ENCODE measurements at regions of chr3 and their contacts with region 1.

Region 1: DNA sequence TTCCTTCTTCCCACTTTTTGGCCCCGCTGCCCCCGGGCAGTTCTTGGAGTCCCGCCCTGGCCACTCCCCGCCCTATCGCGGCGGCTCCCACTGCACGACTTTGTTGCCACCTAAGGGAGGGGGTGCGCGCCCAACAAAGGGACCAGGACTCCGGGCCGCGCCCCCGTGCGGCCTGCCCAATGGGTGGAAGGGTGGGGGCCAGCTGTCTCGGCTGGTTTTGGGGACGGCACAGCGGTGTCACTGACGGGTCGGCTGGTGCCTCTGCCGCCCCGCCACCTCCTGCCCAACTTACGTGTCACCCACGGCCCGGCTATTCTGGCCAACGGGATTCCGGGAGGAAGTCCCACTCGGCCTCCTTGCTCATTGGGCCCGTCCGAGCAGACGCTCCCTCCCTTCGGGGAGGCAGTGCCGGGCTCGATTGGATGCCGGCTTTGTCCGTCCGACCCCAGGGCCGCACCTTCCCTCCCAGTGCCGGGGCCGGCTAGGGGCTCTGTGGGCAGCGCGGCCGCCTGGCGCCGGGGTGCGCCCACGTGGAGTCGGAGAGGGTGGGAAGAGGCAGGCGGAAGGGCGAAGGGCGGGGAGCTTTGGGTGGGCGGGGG is at the start of gene GOLIM4:
- DNase-seq: peak; percentile 94
- ATAC-seq: peak; percentile 94
- H3K4me3 ChIP-seq: peak within 1 kb of the TSS; percentile 77 to 79 (median 77)
- H3K27ac ChIP-seq: peak within 1 kb of the TSS; percentile 74
- H3K4me1 ChIP-seq: peaks cover 41% of the 10 kb centered on the region
- H3K27me3 ChIP-seq: no peaks in the 10 kb centered on the region; a peak in 1 of 5 replicates
- CTCF ChIP-seq: peak; percentile 39
- EP300 ChIP-seq: 0 out of 4 replicates have a peak, but pooled peaks of 1 of the 2 experiments have one; percentile 17
- POLR2A ChIP-seq: peak in 1 of 2 experiments; percentile 82; a peak in 2 of 4 replicates
- RAD21 ChIP-seq: no peak
- total RNA-seq, gene GOLIM4: 31.5 and 47.7 TPM in 2 replicates

Region 2: DNA sequence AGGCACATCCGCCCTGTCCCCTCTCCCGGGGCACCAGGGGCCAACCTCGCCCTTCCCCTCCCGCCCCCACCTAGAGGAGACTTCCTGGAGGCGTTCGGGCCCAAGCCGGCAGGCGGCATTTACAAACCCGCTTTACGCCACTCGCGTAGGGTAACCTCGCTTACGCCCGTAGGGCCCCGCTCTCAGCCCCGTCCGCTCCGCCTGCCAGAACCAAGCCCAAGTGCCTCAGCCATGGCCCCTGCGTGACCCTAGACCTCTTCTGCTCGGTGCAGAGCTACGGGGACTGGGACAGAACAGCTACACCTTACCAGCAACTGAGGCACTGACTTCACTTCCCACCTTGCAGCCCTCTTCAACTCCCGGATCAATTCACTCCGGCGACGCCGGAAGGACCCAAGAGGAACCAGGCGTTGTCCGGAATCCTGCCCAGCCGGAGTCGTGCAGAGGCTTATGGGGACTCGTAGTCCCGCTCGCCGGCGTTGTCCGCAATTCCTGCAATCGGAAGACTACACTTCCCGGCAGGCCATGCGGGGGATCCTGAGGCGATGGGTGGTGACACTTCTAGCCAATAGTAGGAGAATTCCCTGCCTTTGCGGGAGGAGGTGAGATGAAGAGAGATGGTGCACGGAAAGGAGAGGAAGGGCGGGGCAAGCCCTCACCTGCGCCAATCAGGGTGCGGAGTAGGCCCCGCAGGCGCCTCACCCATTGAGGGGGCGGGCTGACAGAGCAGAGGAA is 361.0 kb before region 1 on chr3 and contains the start of gene PDCD10:
- CTCF ChIA-PET with region 1: no interaction called
- POLR2A ChIA-PET with region 1: no interaction called
- in situ Hi-C with region 1: no loop called
- intact Hi-C with region 1: loop called (anchors 10 kb)
- DNase-seq: peak; percentile 99
- ATAC-seq: peak; percentile 92
- H3K4me3 ChIP-seq: peak within 1 kb of the TSS; percentile 95 to 98 (median 98)
- H3K27ac ChIP-seq: peak within 1 kb of the TSS; percentile 97
- H3K4me1 ChIP-seq: peaks cover 69% of the 10 kb centered on the region
- H3K27me3 ChIP-seq: peaks cover 0 to 4% of the 10 kb centered on the region in 2 experiments; a peak in 1 of 5 replicates
- CTCF ChIP-seq: 0 out of 2 replicates have a peak, but pooled peaks have one; percentile 12
- EP300 ChIP-seq: no peak
- POLR2A ChIP-seq: peak; percentile 80 to 91
- RAD21 ChIP-seq: no peak
- total RNA-seq, gene PDCD10: 53.9 and 84.4 TPM in 2 replicates

Region 3: GRCh38 chr3:168047190-168047795 is 48.4 kb before region 1 on chr3:
- CTCF ChIA-PET with region 1: interaction called, 7 read pairs
- POLR2A ChIA-PET with region 1: no interaction called
- in situ Hi-C with region 1: no loop called
- intact Hi-C with region 1: loop called (anchors 2 kb)
- DNase-seq: peak; percentile 76
- ATAC-seq: peak; percentile 87
- H3K4me3 ChIP-seq: no peak overlapping the region
- H3K27ac ChIP-seq: no peak overlapping the region
- H3K4me1 ChIP-seq: no peaks in the 10 kb centered on the region
- H3K27me3 ChIP-seq: no peaks in the 10 kb centered on the region
- CTCF ChIP-seq: peak; percentile 89
- EP300 ChIP-seq: no peak
- POLR2A ChIP-seq: no peak
- RAD21 ChIP-seq: peak; percentile 78

Region 4: DNA sequence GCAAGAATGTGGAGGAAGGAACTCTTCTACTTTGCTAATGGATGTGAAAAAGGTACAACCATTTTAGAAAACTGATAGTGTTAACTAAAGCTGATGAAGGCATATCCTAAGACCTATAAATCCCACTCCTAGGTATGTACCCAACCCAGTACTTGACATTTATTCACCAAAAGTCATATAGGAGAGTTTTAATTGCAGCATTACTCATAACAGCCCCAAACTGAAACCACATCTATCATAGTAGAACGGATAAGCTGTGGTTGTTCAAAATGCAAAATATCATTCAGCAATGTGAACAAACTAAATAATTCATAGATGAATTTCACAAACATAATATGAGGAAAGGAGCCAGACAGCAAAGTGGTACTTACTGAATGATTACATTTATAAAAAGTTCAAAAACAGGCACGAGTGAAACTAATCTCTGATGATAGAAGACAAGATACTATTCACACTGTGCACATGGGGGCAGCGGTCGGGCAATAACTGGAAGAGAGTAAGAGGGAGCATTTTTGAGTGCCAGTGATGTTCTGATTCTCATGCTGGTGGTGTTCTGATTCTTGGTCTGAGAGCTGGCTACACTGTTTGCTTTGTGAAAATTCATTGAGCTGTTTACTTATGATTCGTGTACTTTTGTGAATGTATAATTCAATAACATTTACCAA is 34.2 kb before region 1 on chr3:
- CTCF ChIA-PET with region 1: no interaction called
- POLR2A ChIA-PET with region 1: interaction called, 3 read pairs
- in situ Hi-C with region 1: no loop called
- intact Hi-C with region 1: loop called (anchors 2 kb)
- DNase-seq: peak; percentile 13
- ATAC-seq: peak; percentile 80
- H3K4me3 ChIP-seq: no peak overlapping the region
- H3K27ac ChIP-seq: no peak overlapping the region
- H3K4me1 ChIP-seq: peaks cover 37% of the 10 kb centered on the region
- H3K27me3 ChIP-seq: no peaks in the 10 kb centered on the region
- CTCF ChIP-seq: 0 out of 2 replicates have a peak, but pooled peaks have one; percentile 28
- EP300 ChIP-seq: no peak
- POLR2A ChIP-seq: no peak
- RAD21 ChIP-seq: no peak

Region 5: GRCh38 chr3:168117853-168118313 is 22.2 kb after region 1 on chr3:
- CTCF ChIA-PET with region 1: no interaction called
- POLR2A ChIA-PET with region 1: interaction called, 17 read pairs
- in situ Hi-C with region 1: no loop called
- intact Hi-C with region 1: loop called (anchors 1 kb)
- DNase-seq: peak; percentile 62
- ATAC-seq: peak; percentile 92
- H3K4me3 ChIP-seq: no peak overlapping the region
- H3K27ac ChIP-seq: no peak overlapping the region
- H3K4me1 ChIP-seq: peaks cover 21% of the 10 kb centered on the region
- H3K27me3 ChIP-seq: no peaks in the 10 kb centered on the region
- CTCF ChIP-seq: no peak
- EP300 ChIP-seq: peak in 1 of 2 experiments; percentile 24; a peak in 1 of 4 replicates
- POLR2A ChIP-seq: no peak
- RAD21 ChIP-seq: no peak

Region 6: GRCh38 chr3:168165390-168166269 is 69.9 kb after region 1 on chr3:
- CTCF ChIA-PET with region 1: no interaction called
- POLR2A ChIA-PET with region 1: no interaction called
- in situ Hi-C with region 1: no loop called
- intact Hi-C with region 1: loop called (anchors 1 kb)
- DNase-seq: peak; percentile 73
- ATAC-seq: peak; percentile 94
- H3K4me3 ChIP-seq: peak overlapping the region in 2 of 3 experiments; percentile 42 to 44; a peak in 3 of 6 replicates
- H3K27ac ChIP-seq: no peak overlapping the region
- H3K4me1 ChIP-seq: peaks cover 6% of the 10 kb centered on the region; the same call in 1 of the 2 replicates
- H3K27me3 ChIP-seq: no peaks in the 10 kb centered on the region
- CTCF ChIP-seq: peak; percentile 80
- EP300 ChIP-seq: no peak
- POLR2A ChIP-seq: no peak
- RAD21 ChIP-seq: peak; percentile 60; the same call in 1 of the 2 replicates

Region 7: DNA sequence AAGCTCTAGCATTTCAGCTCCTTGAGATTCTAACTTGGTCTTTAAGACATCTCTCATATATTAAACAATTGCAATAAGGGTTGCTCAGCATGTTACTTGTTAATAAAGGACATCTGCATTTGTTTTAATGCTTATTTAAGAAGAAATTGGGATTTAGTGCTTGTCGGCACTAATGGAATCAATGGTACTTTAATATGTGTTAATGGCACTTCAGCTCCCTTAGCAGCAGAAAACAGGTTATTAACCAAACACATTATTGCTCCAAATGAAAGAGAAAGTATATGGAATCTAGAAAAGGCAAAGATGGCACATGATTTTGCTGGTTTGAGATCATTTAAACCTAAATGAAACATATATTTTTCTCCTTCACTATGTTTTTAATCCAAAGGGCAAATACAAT is 137.3 kb after region 1 on chr3:
- CTCF ChIA-PET with region 1: no interaction called
- POLR2A ChIA-PET with region 1: no interaction called
- in situ Hi-C with region 1: no loop called
- intact Hi-C with region 1: no loop called
- DNase-seq: no peak
- ATAC-seq: no peak
- H3K4me3 ChIP-seq: no peak overlapping the region
- H3K27ac ChIP-seq: no peak overlapping the region
- H3K4me1 ChIP-seq: no peaks in the 10 kb centered on the region
- H3K27me3 ChIP-seq: no peaks in the 10 kb centered on the region; a peak in 1 of 5 replicates
- CTCF ChIP-seq: no peak
- EP300 ChIP-seq: no peak
- POLR2A ChIP-seq: no peak
- RAD21 ChIP-seq: no peak

Region 8: GRCh38 chr3:168251371-168251770 is 155.7 kb after region 1 on chr3:
- CTCF ChIA-PET with region 1: no interaction called
- POLR2A ChIA-PET with region 1: no interaction called
- in situ Hi-C with region 1: no loop called
- intact Hi-C with region 1: no loop called
- DNase-seq: peak; percentile 5
- ATAC-seq: no peak
- H3K4me3 ChIP-seq: no peak overlapping the region
- H3K27ac ChIP-seq: no peak overlapping the region
- H3K4me1 ChIP-seq: peaks cover 18% of the 10 kb centered on the region
- H3K27me3 ChIP-seq: peaks cover 0 to 24% of the 10 kb centered on the region in 2 experiments; a peak in 3 of 5 replicates
- CTCF ChIP-seq: no peak
- EP300 ChIP-seq: no peak
- POLR2A ChIP-seq: no peak
- RAD21 ChIP-seq: no peak

Measured in HepG2 (cell line).